Motor neuron (in vitro differentiated cells): ENCODE measurements at regions of chr4 and their contacts with region 1.

Region 1: GRCh38 chr4:110049951-110050925 is 137.6 kb downstream of the EGF start:
- ATAC-seq: peak in 2 of 8 experiments; percentile 28 to 39
- H3K4me3 ChIP-seq: no peak overlapping the region
- H3K27ac ChIP-seq: no peak overlapping the region
- H3K4me1 ChIP-seq: peaks cover 0 to 5% of the 10 kb centered on the region in 2 donors

Region 2: DNA sequence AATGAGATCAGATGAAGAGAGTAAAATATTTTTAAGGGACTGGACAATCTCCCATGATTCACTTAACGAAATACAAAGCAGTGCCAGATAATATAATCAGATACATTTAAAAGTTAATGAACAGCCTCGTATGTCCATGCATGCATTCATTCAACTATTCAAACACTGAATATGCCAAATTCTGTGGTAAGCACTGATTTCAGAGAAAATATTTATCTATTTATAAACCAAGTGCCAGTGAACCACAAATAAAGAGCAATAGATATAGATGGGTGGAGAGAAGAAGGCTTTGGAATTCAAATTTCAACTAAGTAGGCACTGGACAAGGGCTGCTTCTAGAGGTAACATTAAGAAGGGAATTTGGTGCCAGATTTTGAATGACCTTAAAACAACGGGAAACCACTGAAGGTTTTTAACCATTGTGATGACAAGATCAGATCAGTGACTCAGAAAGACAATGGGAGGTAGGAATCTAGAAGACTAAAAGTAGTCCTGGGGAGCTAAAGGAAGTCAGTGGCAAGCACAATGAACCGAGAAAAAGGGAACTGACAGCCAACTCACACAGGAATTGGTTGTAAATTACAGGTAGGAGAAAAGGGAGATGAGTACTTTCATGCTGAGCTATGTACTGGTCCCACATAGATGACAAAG is 134.0 kb after region 1 on chr4:
- in situ Hi-C with region 1: no loop called
- ATAC-seq: peak in 6 of 8 experiments; percentile 4 to 52 (median 22)
- H3K4me3 ChIP-seq: no peak overlapping the region
- H3K27ac ChIP-seq: no peak overlapping the region
- H3K4me1 ChIP-seq: peaks cover 5 to 11% of the 10 kb centered on the region in 2 donors

Region 3: GRCh38 chr4:110211007-110211769 is 160.9 kb after region 1 on chr4:
- in situ Hi-C with region 1: loop called in 1 of 9 experiments (anchors 25 kb)
- ATAC-seq: peak in 3 of 8 experiments; percentile 18 to 45 (median 33)
- H3K4me3 ChIP-seq: no peak overlapping the region
- H3K27ac ChIP-seq: no peak overlapping the region
- H3K4me1 ChIP-seq: no peaks in the 10 kb centered on the region

Region 4: GRCh38 chr4:110344162-110344561 is 293.9 kb after region 1 on chr4:
- in situ Hi-C with region 1: no loop called
- ATAC-seq: peak in 3 of 8 experiments; percentile 63 to 76 (median 72)
- H3K4me3 ChIP-seq: no peak overlapping the region
- H3K27ac ChIP-seq: no peak overlapping the region
- H3K4me1 ChIP-seq: peaks cover 3 to 23% of the 10 kb centered on the region in 2 donors